ENCODE measurements at regions of chr1 and their contacts with region 1.

Region 1: GRCh38 chr1:245045087-245045881 is 109.5 kb upstream of the KIF26B start:
- DNase-seq: no peak
- H3K4me3 ChIP-seq: no peak overlapping the region
- H3K27ac ChIP-seq: no peak overlapping the region
- H3K4me1 ChIP-seq: no peaks in the 10 kb centered on the region
- H3K27me3 ChIP-seq: no peaks in the 10 kb centered on the region
- CTCF ChIP-seq: no peak
- EP300 ChIP-seq: no peak
- POLR2A ChIP-seq: no peak

Region 2: DNA sequence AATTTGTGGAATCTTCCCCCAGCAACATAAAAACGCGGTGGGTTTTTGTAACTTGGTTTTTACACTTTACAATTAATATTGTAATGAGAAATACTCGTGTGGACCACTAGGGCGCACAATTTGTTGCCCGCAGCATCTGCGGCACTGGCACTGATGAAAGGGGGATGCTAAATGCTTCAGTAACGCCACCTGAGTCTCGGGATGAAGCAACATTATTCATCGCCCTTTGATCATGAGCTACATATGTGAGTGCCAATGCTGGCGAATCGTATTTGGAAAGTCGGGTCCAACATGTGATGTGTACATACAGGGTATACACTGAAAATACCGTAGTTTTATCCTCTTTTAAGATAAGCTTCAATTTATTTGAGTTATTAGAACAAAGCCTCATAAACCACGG is 244.0 kb before region 1 on chr1:
- intact Hi-C with region 1: loop called in 1 of 4 experiments (anchors 10 kb)
- DNase-seq: no peak
- H3K4me3 ChIP-seq: no peak overlapping the region
- H3K27ac ChIP-seq: no peak overlapping the region
- H3K4me1 ChIP-seq: no peaks in the 10 kb centered on the region
- H3K27me3 ChIP-seq: no peaks in the 10 kb centered on the region
- CTCF ChIP-seq: no peak
- EP300 ChIP-seq: no peak
- POLR2A ChIP-seq: no peak

Region 3: GRCh38 chr1:244815600-244816099 is 229.6 kb before region 1 on chr1:
- intact Hi-C with region 1: loop called in 1 of 4 experiments (anchors 10 kb)
- DNase-seq: no peak
- H3K4me3 ChIP-seq: no peak overlapping the region
- H3K27ac ChIP-seq: no peak overlapping the region
- H3K4me1 ChIP-seq: no peaks in the 10 kb centered on the region
- H3K27me3 ChIP-seq: no peaks in the 10 kb centered on the region
- CTCF ChIP-seq: no peak
- EP300 ChIP-seq: no peak
- POLR2A ChIP-seq: no peak

Region 4: DNA sequence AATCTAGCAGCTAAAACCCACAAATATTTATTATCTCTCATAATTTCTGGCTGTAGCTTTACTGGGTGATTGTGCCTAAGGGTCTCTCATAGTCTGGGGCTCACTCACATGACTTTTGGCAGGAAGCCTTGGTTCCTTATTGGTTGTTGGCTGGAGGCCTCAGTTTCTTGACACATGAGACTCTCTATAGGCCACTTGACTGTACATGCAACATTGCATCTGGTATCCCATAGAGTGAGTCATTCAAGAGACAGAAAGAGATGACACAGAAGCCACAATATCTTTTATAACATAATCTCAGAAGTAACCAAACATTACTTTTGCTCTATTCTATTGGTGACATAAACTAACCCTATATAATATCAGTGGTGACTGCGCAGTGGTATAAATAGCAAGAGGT is 52.5 kb before region 1 on chr1:
- intact Hi-C with region 1: no loop called
- DNase-seq: no peak
- H3K4me3 ChIP-seq: no peak overlapping the region
- H3K27ac ChIP-seq: no peak overlapping the region
- H3K4me1 ChIP-seq: no peaks in the 10 kb centered on the region
- H3K27me3 ChIP-seq: no peaks in the 10 kb centered on the region
- CTCF ChIP-seq: no peak
- EP300 ChIP-seq: no peak
- POLR2A ChIP-seq: no peak

Measured in ovary (tissue), 10 donors.